Ovary (tissue), 10 donors: ENCODE measurements at regions of chr22 and their contacts with region 1.

Region 1: GRCh38 chr22:25447686-25448434 is 116.6 kb upstream of the GRK3 start:
- DNase-seq: peak; percentile 82 to 94 (median 89)
- H3K4me3 ChIP-seq: peak overlapping the region; percentile 65
- H3K27ac ChIP-seq: peak overlapping the region; percentile 14 to 55
- H3K4me1 ChIP-seq: peaks cover 8% of the 10 kb centered on the region
- H3K27me3 ChIP-seq: no peaks in the 10 kb centered on the region
- CTCF ChIP-seq: peak; percentile 84 to 88 (median 86)
- EP300 ChIP-seq: no peak
- POLR2A ChIP-seq: peak; percentile 26

Region 2: GRCh38 chr22:25362215-25362882 is 85.5 kb before region 1 on chr22:
- intact Hi-C with region 1: loop called in 2 of 4 experiments (anchors 5 to 10 kb)
- DNase-seq: peak; percentile 49 to 75 (median 70)
- H3K4me3 ChIP-seq: no peak overlapping the region
- H3K27ac ChIP-seq: no peak overlapping the region
- H3K4me1 ChIP-seq: peaks cover 17% of the 10 kb centered on the region
- H3K27me3 ChIP-seq: no peaks in the 10 kb centered on the region
- CTCF ChIP-seq: peak; percentile 57 to 79 (median 68)
- EP300 ChIP-seq: no peak
- POLR2A ChIP-seq: no peak